ENCODE measurements at regions of chr20 and their contacts with region 1.

Region 1: GRCh38 chr20:9220874-9221547 is 152.1 kb downstream of the PLCB4 start:
- DNase-seq: no peak

Region 2: GRCh38 chr20:9040863-9041524 is 180.0 kb before region 1 on chr20:
- intact Hi-C with region 1: no loop called
- DNase-seq: no peak

Region 3: DNA sequence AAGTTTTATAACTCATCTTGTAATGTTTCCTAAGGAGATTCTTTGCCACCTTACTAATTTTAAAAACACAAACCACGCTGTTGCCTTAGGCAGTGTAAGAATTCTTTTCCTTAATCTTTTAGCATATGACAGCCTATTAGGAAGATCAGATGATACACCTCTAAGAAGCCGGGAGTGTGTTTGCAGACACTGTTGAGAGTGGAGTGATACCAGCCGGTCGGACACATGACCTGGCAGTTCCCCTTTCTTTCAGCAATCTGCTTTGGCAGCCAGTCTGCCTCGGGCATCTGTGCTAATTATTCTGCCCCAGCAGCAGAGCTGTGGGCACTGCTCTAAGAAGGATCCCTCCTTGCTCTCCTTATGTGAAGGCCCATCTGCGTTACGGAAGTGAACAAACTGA is 101.2 kb before region 1 on chr20:
- intact Hi-C with region 1: loop called (anchors 10 kb)
- DNase-seq: peak; percentile 82

Region 4: DNA sequence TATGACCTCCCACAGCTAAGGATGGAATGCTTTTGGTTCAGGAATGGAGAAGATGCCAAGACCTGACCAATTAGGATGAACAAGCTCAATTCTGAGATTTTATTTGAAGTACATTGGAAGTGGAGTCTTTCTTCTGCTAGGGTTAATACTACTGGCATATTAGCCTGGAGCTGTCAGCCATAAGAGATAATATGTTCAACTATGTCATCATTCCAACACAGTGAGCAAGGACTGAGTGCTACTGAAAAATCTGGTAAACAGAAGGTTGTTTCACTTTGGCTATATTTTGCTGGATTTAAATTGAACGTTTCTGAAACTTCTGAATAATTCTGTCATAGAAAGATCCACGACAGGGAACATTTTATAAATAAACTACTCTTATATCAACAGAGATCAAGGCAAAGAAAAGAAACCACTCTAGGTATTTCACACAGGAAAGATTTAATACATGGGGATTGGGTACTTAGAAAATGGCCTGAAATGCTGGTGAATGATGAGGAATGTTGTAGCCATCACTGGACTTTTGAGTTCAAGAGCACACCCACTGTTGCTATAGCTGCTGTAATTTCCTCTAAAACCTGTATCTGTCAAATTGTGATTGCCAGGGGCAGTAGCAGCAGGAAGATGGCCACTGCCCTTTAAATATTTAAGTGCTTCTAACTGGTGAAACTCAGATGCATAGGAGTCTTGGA is 48.4 kb after region 1 on chr20:
- intact Hi-C with region 1: loop called (anchors 5 kb)
- DNase-seq: no peak

Region 5: GRCh38 chr20:10005885-10006284 is 784.9 kb after region 1 on chr20:
- intact Hi-C with region 1: no loop called
- DNase-seq: no peak